Posterior cingulate gyrus (tissue), 11 donors: ENCODE measurements at regions of chr1 and their contacts with region 1.

Region 1: DNA sequence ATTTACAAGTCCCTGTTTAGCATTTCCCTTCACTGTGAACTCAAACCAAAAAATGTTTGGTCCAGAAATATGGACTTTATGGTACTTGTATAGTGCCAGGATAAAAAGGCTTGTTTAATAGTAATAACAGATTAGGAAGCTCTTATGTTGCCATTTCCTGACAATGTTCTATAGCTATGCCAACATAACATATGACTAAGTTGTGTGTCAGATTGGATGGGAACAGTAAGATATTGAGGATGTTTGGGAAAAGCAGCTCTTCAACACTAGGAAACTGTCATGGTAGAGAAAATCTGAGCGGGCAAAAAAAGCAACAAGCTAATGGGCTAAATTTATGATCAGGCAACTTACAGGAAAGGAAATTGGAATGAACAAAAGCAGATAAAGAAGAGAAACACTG is 287.1 kb upstream of the ADGRL4 start:
- DNase-seq: no peak

Region 2: GRCh38 chr1:79235301-79236002 is 58.2 kb before region 1 on chr1:
- intact Hi-C with region 1: loop called (anchors 2 kb)
- DNase-seq: no peak